Activated CD4-positive, alpha-beta T cell treated with anti-CD3 and anti-CD28 coated beads for 36 hours (primary cell): ENCODE measurements at regions of chr20 and their contacts with region 1.

Region 1: GRCh38 chr20:45311589-45312211 is 3.6 kb upstream of the MATN4 start:
- DNase-seq: peak; percentile 84
- ATAC-seq: peak; percentile 86
- H3K4me3 Mint-ChIP-seq: no peak overlapping the region
- H3K27ac Mint-ChIP-seq: no peak overlapping the region
- H3K4me1 Mint-ChIP-seq: peaks cover 6% of the 10 kb centered on the region
- H3K27me3 Mint-ChIP-seq: peaks cover 45% of the 10 kb centered on the region

Region 2: GRCh38 chr20:45246109-45246508 is 65.6 kb before region 1 on chr20:
- CTCF ChIA-PET with region 1: no interaction called
- POLR2A ChIA-PET with region 1: no interaction called
- intact Hi-C with region 1: no loop called
- DNase-seq: no peak
- ATAC-seq: no peak
- H3K4me3 Mint-ChIP-seq: no peak overlapping the region
- H3K27ac Mint-ChIP-seq: no peak overlapping the region
- H3K4me1 Mint-ChIP-seq: no peaks in the 10 kb centered on the region
- H3K27me3 Mint-ChIP-seq: peaks cover 47% of the 10 kb centered on the region

Region 3: GRCh38 chr20:45257711-45258110 is 54.0 kb before region 1 on chr20:
- CTCF ChIA-PET with region 1: no interaction called
- POLR2A ChIA-PET with region 1: no interaction called
- intact Hi-C with region 1: no loop called
- DNase-seq: no peak
- ATAC-seq: no peak
- H3K4me3 Mint-ChIP-seq: no peak overlapping the region
- H3K27ac Mint-ChIP-seq: no peak overlapping the region
- H3K4me1 Mint-ChIP-seq: no peaks in the 10 kb centered on the region
- H3K27me3 Mint-ChIP-seq: peaks cover 21% of the 10 kb centered on the region

Region 4: DNA sequence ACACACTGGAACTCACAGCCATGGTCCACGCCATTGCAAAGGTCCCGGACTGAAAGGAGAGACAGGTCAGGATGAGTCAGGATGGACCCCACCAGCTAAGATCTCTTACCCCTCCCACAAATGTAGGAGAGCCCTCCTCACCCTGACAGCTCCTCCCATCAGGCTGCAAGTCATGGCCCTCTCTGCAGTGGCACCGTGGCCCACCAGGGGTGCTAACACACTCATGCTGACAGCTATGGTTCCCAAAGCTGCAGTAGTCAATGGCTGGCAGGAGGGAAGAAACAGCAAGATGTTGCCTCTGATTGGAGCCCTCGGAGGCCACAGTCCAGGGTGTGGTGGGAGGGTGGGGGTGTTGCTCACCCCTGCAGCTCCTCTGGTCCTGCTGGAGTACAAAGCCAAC is 10.7 kb before region 1 on chr20:
- CTCF ChIA-PET with region 1: interaction called, 20 read pairs
- POLR2A ChIA-PET with region 1: no interaction called
- intact Hi-C with region 1: no loop called
- DNase-seq: peak; percentile 77
- ATAC-seq: peak; percentile 65
- H3K4me3 Mint-ChIP-seq: no peak overlapping the region
- H3K27ac Mint-ChIP-seq: no peak overlapping the region
- H3K4me1 Mint-ChIP-seq: peaks cover 22% of the 10 kb centered on the region
- H3K27me3 Mint-ChIP-seq: peaks cover 36% of the 10 kb centered on the region